ENCODE measurements at regions of chr3 and their contacts with region 1.

Region 1: DNA sequence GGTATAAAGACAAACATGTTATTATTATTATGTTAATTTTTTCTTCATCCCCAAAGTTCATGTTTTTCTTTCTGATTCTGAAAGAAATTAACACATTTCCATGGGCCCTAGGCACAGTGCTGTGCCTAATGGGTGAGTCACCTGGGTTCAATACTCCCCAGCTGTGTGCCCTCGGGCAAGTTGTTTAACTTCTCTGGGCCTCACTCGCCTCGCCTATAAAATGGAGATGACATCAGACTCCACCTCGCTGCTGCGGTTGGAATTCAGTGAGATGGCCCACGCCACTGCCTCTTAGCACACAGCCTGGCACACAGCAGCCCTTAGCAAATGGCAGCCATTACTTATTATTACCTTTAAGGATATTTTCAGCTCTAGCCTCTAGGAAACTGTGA is 22.6 kb downstream of the DNASE1L3 start:
- DNase-seq: no peak
- ATAC-seq: no peak
- H3K4me3 ChIP-seq: no peak overlapping the region
- H3K27ac ChIP-seq: peak overlapping the region in 1 of 2 experiments; percentile 44; a peak in 1 of 6 replicates
- H3K4me1 ChIP-seq: peaks cover 12% of the 10 kb centered on the region
- CTCF ChIP-seq: no peak
- EP300 ChIP-seq: no peak
- POLR2A ChIP-seq: no peak
- RAD21 ChIP-seq: no peak

Region 2: GRCh38 chr3:57803647-57804081 is 384.5 kb before region 1 on chr3:
- CTCF ChIA-PET with region 1: no interaction called
- POLR2A ChIA-PET with region 1: no interaction called
- DNase-seq: peak; percentile 52 to 88
- ATAC-seq: peak; percentile 85
- H3K4me3 ChIP-seq: peak overlapping the region; percentile 18; the same call in 1 of the 3 replicates
- H3K27ac ChIP-seq: peak overlapping the region; percentile 68 to 76
- H3K4me1 ChIP-seq: peaks cover 69% of the 10 kb centered on the region
- CTCF ChIP-seq: no peak
- EP300 ChIP-seq: no peak
- POLR2A ChIP-seq: no peak
- RAD21 ChIP-seq: no peak

Region 3: GRCh38 chr3:57983734-57984518 is 204.2 kb before region 1 on chr3:
- CTCF ChIA-PET with region 1: no interaction called
- POLR2A ChIA-PET with region 1: no interaction called
- DNase-seq: peak in 1 of 2 experiments; percentile 96
- ATAC-seq: peak; percentile 89 to 93
- H3K4me3 ChIP-seq: no peak overlapping the region
- H3K27ac ChIP-seq: peak overlapping the region; percentile 92 to 98
- H3K4me1 ChIP-seq: peaks cover 63% of the 10 kb centered on the region
- CTCF ChIP-seq: no peak
- EP300 ChIP-seq: peak; percentile 76 to 90; a peak in 4 of 5 replicates
- POLR2A ChIP-seq: no peak
- RAD21 ChIP-seq: peak in 1 of 2 experiments; percentile 38; a peak in 2 of 5 replicates

Region 4: DNA sequence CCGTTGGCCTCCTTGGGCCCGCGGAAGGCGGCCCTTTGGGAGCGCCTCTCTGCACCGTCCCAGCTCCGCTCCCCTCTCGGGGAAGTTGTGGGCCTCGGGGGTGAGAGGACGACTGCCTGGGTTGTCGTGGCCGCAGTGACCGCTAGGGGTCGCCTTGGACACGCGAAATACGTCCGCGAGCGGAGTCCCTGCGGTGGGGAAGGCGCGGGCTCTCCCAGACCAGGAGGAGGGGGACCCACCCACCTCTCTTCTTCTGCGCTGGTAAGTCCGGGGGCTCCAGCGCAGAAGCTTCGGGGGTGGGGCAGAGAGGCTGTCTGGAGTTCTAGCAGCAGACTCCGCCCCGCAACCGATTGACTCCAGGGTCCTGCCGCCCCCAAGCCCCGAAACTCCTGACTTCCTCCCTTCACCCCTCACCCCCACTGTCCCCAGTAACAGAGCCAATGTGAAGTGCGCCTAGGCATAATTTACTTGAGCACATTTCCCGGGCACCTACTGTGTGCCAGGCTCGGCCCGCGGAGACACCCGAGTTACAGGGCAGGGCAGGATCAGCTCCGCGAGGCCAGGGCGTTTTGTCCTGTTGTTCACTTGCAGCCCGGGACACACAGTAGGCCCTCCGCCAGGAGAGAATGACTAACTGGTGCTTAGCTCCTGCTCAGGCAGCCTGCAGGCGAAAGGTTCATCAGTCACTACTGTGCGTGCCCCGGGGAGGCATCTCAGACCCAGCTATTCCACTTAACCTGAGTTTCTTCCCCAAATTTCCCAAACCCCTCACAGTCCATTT is 10.2 kb before region 1 on chr3:
- CTCF ChIA-PET with region 1: interaction called, 11 read pairs
- POLR2A ChIA-PET with region 1: no interaction called
- DNase-seq: peak; percentile 69 to 80
- ATAC-seq: peak; percentile 27 to 70
- H3K4me3 ChIP-seq: no peak overlapping the region
- H3K27ac ChIP-seq: peak overlapping the region; percentile 48 to 98
- H3K4me1 ChIP-seq: peaks cover 75% of the 10 kb centered on the region
- CTCF ChIP-seq: peak; percentile 75
- EP300 ChIP-seq: no peak
- POLR2A ChIP-seq: no peak
- RAD21 ChIP-seq: peak; percentile 57 to 62

Region 5: DNA sequence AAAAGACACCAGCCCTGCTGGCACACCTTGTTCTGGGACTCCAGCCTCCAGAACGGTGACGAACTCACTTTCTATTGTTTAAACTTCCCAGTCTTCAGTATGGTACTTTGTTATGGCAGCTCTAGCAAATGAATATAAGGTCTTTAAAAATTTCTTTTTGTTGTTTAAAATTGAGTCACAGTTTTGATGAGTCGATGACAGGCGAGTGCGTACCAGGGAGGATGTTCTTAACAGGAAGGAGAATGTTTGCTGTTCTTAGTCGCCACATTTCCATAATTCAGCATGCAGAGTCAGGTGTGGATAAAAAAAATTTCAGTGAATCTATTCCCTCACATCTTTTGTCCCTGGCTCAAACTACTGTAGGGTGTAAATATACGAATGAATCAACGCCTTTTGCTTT is 10.2 kb after region 1 on chr3:
- CTCF ChIA-PET with region 1: interaction called, 18 read pairs
- POLR2A ChIA-PET with region 1: no interaction called
- DNase-seq: no peak
- ATAC-seq: no peak
- H3K4me3 ChIP-seq: no peak overlapping the region
- H3K27ac ChIP-seq: no peak overlapping the region
- H3K4me1 ChIP-seq: no peaks in the 10 kb centered on the region
- CTCF ChIP-seq: no peak
- EP300 ChIP-seq: no peak
- POLR2A ChIP-seq: no peak
- RAD21 ChIP-seq: no peak

Region 6: DNA sequence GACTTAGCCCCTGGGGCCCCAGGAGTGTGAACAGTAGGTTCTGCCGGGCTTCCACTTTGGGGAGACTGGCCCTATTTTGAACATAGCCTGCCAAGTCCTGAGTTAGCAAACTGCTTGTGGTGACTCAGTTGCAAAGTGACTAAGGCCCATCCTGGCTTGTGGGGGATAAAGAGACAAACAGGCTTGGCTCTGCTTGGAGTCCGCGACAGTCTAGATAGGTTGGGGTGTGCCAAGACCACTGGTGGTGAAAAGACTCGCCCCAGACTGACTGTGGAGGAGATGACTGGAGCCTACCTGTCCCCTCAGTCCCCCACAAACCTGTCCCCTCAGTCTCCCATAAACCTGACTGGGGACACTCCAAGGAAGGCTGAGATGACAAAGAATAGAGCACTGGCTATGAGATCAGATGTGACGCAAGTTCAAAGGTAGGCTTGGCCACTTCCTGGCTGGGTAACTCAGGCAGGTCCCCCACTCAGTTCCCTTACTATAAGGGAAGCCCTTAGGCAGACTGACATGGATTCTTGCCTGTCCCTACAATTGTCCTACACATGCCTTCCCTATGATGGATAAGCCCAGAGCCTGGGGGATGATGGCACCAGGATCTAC is 18.3 kb after region 1 on chr3:
- CTCF ChIA-PET with region 1: interaction called, 18 read pairs
- POLR2A ChIA-PET with region 1: no interaction called
- DNase-seq: peak in 1 of 2 experiments; percentile 22
- ATAC-seq: peak; percentile 50 to 76
- H3K4me3 ChIP-seq: no peak overlapping the region
- H3K27ac ChIP-seq: peak overlapping the region in 1 of 2 experiments; percentile 49; a peak in 3 of 6 replicates
- H3K4me1 ChIP-seq: peaks cover 10% of the 10 kb centered on the region; the same call in 2 of the 3 replicates
- CTCF ChIP-seq: no peak
- EP300 ChIP-seq: no peak
- POLR2A ChIP-seq: no peak
- RAD21 ChIP-seq: no peak

Region 7: GRCh38 chr3:58217209-58217811 is 29.1 kb after region 1 on chr3:
- CTCF ChIA-PET with region 1: interaction called, 38 read pairs
- POLR2A ChIA-PET with region 1: interaction called, 5 read pairs
- DNase-seq: peak; percentile 76 to 92
- ATAC-seq: peak; percentile 98 to 99
- H3K4me3 ChIP-seq: no peak overlapping the region
- H3K27ac ChIP-seq: peak overlapping the region; percentile 70 to 86
- H3K4me1 ChIP-seq: peaks cover 24% of the 10 kb centered on the region
- CTCF ChIP-seq: peak; percentile 78
- EP300 ChIP-seq: no peak
- POLR2A ChIP-seq: no peak
- RAD21 ChIP-seq: peak; percentile 54

Region 8: GRCh38 chr3:58299839-58300516 is 111.8 kb after region 1 on chr3:
- CTCF ChIA-PET with region 1: interaction called, 172 read pairs
- POLR2A ChIA-PET with region 1: interaction called, 3 read pairs
- DNase-seq: peak in 1 of 2 experiments; percentile 49
- ATAC-seq: peak in 1 of 2 experiments; percentile 61; a peak in 3 of 6 replicates
- H3K4me3 ChIP-seq: no peak overlapping the region
- H3K27ac ChIP-seq: no peak overlapping the region
- H3K4me1 ChIP-seq: peaks cover 12% of the 10 kb centered on the region; the same call in 2 of the 3 replicates
- CTCF ChIP-seq: peak; percentile 71
- EP300 ChIP-seq: no peak
- POLR2A ChIP-seq: no peak
- RAD21 ChIP-seq: peak; percentile 70 to 74

Region 9: DNA sequence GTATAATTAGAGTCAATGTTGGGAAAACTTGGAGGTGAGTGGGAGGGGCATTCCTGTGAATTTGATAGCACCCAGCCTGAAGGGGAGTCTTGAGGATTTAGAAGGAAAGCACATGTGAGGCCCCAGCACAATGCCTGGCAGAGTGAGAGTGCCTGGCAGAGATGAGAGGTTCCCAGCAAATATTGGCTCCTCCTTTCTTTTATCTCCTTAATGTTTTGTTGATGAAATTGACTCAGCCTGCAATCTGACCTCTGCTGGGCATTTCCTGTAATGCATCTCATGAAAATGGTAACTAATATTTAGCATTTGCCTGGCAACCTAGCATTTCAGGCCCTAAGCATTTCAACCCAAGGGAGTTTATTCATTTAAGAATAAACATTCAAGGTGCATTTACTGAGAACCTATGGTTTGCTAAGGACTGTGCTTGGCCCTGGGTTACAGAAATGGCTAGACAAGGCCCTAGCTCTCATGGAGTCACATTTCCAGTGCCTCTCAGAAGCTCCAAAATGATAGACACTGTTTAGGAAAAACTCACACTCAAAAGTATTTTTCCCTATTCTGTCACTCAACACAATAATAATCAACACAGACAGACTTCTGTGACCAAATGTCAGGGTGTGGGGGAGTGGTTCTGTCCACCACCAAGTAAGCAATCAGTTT is 226.5 kb after region 1 on chr3:
- CTCF ChIA-PET with region 1: interaction called, 13 read pairs
- POLR2A ChIA-PET with region 1: no interaction called
- DNase-seq: peak; percentile 26 to 51
- ATAC-seq: peak; percentile 62 to 84; a peak in 4 of 6 replicates
- H3K4me3 ChIP-seq: no peak overlapping the region
- H3K27ac ChIP-seq: no peak overlapping the region
- H3K4me1 ChIP-seq: no peaks in the 10 kb centered on the region
- CTCF ChIP-seq: peak; percentile 63
- EP300 ChIP-seq: no peak
- POLR2A ChIP-seq: no peak
- RAD21 ChIP-seq: peak; percentile 42 to 62; a peak in 4 of 5 replicates